Activated B cell treated with CpG ODN at 0.5 μM for 24 hours (primary cell): ENCODE measurements at regions of chr4 and their contacts with region 1.

Region 1: DNA sequence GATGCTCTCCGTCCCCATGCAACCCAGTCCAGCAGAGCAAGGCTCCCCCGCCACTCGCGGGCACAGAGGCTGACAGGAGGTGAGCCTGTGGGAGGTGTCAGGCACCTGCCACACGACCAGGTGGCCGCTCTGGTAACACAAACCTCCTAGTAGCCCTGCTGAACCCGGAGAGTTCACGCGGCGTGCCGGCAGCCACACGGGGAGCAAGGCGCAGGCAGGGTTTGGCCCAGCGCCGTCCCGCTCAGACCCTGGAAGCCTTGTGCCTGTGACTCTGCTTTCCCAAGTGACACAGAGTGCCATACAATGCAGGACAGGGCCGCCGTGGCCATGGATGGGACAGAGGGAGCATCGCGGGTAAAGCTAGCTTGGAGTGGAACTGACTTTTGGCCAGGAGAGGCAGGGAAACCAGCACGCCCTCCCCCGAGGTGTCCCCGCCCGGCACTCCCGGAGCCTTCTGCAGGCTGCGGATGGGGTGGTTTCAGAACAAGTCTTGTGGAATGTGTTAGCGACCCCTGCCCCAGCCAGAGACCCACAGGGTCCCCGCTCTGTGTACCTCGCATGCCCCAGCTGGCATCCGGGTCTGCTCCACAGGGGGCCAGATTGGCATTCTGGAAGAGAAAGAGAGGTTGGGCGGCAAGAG is 44.7 kb upstream of the AFAP1 start:
- DNase-seq: no peak
- ATAC-seq: no peak
- H3K4me3 Mint-ChIP-seq: no peak overlapping the region
- H3K27ac Mint-ChIP-seq: no peak overlapping the region
- H3K4me1 Mint-ChIP-seq: no peaks in the 10 kb centered on the region
- H3K27me3 Mint-ChIP-seq: peaks cover 10% of the 10 kb centered on the region
- CTCF ChIP-seq: no peak

Region 2: DNA sequence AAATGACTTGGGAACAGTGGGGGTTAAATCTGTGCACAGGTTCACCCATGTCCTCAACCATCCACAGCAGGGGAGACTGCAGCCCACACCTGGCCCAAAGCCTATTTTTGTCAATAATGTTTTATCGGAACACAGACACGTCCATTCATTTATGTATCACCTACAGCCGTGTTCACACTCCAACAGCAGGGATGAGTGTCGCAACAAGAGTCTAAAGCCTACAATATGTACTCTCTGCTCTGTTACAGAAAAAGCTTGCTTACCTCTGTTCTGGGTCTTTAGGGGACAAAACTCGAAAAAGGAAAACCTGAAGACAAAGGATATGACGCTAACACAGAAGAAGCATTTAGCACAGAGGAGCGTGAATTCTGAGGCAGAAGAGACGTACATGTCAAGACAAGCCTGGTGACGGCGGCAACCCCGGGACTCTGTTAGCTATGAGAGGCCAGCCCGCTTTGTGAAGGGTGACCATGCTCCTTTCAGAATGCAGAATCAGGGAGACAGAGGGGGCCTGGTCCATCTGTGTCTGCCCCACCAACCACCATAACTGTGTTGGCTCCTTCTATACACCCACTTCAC is 90.2 kb before region 1 on chr4:
- CTCF ChIA-PET with region 1: no interaction called
- POLR2A ChIA-PET with region 1: interaction called, 10 read pairs
- intact Hi-C with region 1: no loop called
- DNase-seq: no peak
- ATAC-seq: no peak
- H3K4me3 Mint-ChIP-seq: no peak overlapping the region
- H3K27ac Mint-ChIP-seq: no peak overlapping the region
- H3K4me1 Mint-ChIP-seq: no peaks in the 10 kb centered on the region
- H3K27me3 Mint-ChIP-seq: peaks cover 5% of the 10 kb centered on the region
- CTCF ChIP-seq: no peak